Posterior vena cava (tissue), 2 donors: ENCODE measurements at regions of chr14 and their contacts with region 1.

Region 1: DNA sequence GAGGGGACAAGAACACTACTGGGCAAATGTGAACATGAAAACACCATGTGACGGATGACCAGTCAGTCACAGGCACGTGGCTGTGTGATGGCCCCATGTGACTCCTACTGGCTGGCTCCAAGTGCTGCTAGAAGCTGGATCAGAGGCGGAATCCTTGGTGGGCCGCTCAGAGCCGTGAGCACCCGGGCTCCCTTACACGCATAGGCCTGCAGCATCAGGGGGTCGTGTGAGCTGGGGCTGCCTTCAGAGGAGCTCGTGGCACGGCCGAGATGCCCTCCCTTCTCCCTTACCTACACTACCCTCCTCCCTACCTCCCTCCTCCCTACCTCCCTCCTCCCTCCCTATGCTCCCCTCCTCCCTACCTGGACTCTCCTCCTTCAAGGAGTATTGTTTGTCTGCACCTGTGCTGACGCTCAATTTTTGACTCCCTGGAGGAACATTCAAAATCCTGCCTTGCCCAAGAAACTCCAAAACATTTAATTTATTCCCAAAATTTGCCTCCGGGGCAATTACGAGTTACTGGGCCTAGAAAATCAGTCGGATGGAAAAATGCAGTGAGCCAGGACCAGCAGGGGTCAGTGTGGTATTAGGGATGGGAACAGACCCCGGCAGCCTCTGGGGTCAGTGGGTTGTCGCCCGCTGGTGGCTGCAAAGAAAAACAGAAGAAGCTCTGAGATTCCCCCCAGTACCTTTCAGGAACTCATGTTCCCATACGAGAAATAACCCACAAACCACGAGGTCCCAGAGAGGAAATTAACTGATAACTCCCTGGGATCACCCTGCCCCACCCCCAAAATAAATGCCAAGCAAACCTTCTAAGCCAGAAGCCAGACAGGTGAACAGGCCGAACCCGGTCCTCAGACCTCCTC is 61.2 kb downstream of the C14orf132 start:
- DNase-seq: peak; percentile 91

Region 2: GRCh38 chr14:96001866-96002497 is 98.4 kb before region 1 on chr14:
- intact Hi-C with region 1: loop called (anchors 2 to 10 kb)
- DNase-seq: no peak

Region 3: GRCh38 chr14:96189281-96189711 is 88.9 kb after region 1 on chr14:
- intact Hi-C with region 1: loop called in 1 of 2 experiments (anchors 10 kb)
- DNase-seq: no peak